HEK293 (cell line): ENCODE measurements at regions of chr16 and their contacts with region 1.

Region 1: DNA sequence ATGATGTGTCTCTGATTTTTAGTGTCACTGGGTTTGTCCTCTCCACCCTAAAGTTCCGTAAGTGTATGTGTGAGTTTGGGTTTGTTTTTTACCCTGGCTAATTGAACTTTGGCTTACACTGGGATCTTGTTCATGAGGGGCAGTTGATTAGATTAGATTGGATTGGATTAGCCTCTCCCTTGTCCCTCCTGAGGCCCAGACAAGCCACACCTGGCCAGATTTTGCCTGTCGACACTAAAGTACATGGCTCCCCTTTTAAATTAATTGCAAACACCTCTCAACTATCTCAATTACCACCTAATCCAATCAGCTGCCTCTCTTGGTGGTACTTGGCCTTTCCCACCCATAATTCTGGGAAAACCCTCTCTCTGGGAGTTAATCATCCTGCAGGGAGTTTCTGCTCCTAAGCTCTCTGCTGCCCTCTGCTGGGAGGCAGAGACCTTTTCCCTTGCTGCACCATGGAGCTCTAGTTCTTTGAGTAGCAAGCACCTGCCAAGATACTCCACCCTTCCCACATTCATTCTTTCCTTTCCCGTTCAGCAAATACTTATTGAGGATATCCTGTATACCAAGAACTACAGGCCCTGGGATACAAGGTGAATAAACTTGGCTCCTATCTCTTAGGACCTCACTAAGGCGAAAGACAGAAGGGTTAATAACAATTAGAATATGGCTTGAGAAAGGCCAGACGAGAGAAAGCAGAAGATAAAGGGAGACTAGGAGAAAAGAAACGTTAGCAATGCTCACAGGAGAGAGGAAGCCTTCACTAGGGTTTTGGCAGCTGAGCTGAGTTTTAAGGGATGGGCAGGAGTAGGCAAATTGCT is 60.0 kb upstream of the MPHOSPH6 start:
- H3K4me3 ChIP-seq: no peak overlapping the region
- H3K27ac ChIP-seq: no peak overlapping the region
- H3K4me1 ChIP-seq: no peaks in the 10 kb centered on the region
- CTCF ChIP-seq: peak; percentile 67

Region 2: GRCh38 chr16:81940781-81941560 is 289.0 kb before region 1 on chr16:
- CTCF ChIA-PET with region 1: interaction called, 27 read pairs
- POLR2A ChIA-PET with region 1: no interaction called
- H3K4me3 ChIP-seq: no peak overlapping the region
- H3K27ac ChIP-seq: no peak overlapping the region
- H3K4me1 ChIP-seq: no peaks in the 10 kb centered on the region
- CTCF ChIP-seq: no peak

Region 3: DNA sequence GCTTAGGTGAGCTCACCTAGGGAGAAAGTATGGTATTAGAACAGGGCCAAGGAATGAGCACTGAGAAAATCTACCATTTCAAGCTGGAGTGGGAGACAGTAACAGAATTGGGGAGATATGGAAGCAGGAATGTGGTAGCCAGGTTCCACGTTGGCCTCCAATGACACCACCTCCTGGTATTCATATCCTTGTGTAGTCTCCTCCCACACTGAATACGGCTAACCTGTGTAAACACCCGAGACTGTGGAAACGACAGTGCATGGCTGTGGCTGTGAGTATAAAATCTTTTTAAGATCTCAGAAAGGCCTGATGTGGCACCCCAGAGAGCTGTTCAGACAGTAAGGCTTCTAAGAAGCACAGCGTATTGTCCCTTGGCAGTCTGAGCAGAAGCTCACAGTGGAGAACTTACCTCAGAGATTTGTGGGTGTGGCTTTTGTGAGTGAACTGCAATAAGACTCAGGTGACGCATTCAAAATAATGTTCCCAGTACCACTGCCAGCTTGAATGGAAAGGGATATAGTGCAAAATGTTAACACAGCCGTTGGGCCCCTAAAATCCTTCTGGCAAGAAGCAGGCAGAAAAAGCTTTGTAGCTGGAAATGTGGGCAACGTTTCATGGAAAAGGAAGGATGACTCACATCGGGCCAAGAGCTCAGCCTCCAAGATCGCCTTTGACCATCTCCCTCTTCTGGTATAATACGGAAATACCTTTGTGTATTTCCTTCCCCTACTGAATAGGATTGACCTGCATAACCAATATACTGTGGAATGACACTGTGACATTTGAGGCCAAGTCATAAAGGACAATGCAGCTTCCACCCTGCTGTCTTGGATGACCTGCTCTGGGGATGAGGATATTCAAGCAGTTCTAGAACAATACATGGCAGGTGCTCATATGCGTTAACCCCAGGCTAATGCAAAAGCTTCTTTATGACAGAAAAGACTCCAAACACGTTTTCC is 233.1 kb before region 1 on chr16:
- CTCF ChIA-PET with region 1: interaction called, 17 read pairs
- POLR2A ChIA-PET with region 1: no interaction called
- H3K4me3 ChIP-seq: no peak overlapping the region
- H3K27ac ChIP-seq: no peak overlapping the region
- H3K4me1 ChIP-seq: no peaks in the 10 kb centered on the region
- CTCF ChIP-seq: no peak

Region 4: GRCh38 chr16:82031116-82032084 is 198.6 kb before region 1 on chr16:
- CTCF ChIA-PET with region 1: interaction called, 29 read pairs
- POLR2A ChIA-PET with region 1: no interaction called
- H3K4me3 ChIP-seq: no peak overlapping the region
- H3K27ac ChIP-seq: no peak overlapping the region
- H3K4me1 ChIP-seq: no peaks in the 10 kb centered on the region
- CTCF ChIP-seq: peak; percentile 45

Region 5: GRCh38 chr16:82368041-82368440 is 138.0 kb after region 1 on chr16:
- CTCF ChIA-PET with region 1: no interaction called
- POLR2A ChIA-PET with region 1: no interaction called
- H3K4me3 ChIP-seq: no peak overlapping the region
- H3K27ac ChIP-seq: no peak overlapping the region
- H3K4me1 ChIP-seq: no peaks in the 10 kb centered on the region
- CTCF ChIP-seq: peak; percentile 25; the same call in 1 of the 2 replicates